Ascending aorta (tissue), 2 donors: ENCODE measurements at regions of chr17 and their contacts with region 1.

Region 1: DNA sequence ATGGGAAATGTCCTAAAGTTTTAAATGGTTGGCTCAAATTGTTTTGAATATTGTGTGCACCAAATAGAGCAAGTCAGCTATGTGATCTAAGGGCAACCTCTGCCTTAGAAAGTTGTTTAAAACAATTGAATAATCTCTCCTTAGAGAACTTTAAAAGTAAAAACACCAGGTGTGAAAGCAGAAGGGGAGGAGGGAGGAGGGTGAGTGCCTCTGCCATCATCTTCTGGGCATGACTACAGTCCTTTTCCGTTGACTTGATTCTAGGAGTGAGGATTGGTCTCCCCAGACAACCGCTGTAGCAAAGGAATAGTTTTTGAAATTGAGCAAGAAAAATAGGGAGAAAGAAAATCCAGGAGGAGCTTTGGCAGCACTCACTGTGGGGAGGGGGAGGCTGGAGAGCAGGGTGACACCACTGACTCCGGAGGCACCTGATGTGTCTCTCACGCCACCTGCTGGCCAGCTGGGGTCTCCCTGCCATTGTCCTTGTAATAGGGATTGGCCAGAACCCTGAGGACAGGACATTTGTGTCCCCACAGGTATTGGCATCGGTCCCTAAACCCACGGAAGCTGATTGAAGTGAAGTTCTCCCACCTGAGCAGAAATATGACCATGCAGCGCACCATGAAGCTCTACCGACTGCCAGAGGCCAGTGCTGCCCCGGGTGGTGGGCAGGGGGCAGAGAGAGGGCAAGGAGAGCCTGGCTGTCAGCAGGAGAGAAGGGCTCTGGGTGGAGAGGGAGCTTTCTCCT is 33.3 kb downstream of the PLCD3 start:
- DNase-seq: peak; percentile 63 to 97
- H3K4me3 ChIP-seq: peak overlapping the region in 1 of 2 donors; percentile 9
- H3K27ac ChIP-seq: peak overlapping the region; percentile 64 to 80
- H3K4me1 ChIP-seq: peaks cover 16 to 45% of the 10 kb centered on the region in 2 donors
- H3K27me3 ChIP-seq: no peaks in the 10 kb centered on the region
- CTCF ChIP-seq: peak; percentile 85 to 96 (median 91)

Region 2: DNA sequence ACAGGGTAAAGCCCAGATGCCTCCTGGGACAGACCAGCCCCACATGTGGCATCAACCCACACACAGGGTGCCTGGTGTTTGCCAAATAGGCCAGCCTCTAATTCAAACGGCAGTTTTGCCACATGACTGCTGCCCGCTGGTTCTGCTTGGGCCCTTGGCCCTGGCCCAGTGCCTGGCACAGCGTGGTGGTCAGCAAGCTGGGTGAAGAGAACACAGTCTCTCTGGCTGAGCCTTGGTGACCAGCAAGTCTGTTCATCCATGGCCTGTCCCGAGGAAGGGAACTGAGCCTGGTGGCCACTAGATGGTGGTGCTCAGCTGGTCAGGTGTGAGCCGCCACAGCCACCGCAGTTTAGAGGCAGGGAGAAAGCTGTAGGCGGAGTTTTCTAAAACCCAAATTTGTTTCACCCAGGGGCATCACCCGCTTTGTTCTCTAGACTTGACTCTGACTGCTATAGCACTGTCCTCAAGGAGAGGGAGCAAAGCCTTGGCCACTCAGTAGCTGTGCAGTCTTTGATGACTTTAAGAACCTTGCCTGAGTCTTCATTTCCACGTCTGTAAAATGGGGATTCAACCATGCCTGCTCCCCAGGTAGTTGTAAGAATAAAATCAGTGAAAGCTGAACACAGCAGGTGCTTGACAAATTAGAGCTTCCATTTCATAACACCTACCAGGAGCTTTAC is 179.0 kb before region 1 on chr17:
- intact Hi-C with region 1: loop called (anchors 2 kb)
- DNase-seq: peak; percentile 54 to 90
- H3K4me3 ChIP-seq: no peak overlapping the region
- H3K27ac ChIP-seq: peak overlapping the region in 1 of 2 donors; percentile 30
- H3K4me1 ChIP-seq: peaks cover 12 to 24% of the 10 kb centered on the region in 2 donors
- H3K27me3 ChIP-seq: no peaks in the 10 kb centered on the region
- CTCF ChIP-seq: peak; percentile 82 to 90 (median 89)

Region 3: GRCh38 chr17:44968226-44969143 is 130.6 kb before region 1 on chr17 and contains the start of gene C1QL1:
- intact Hi-C with region 1: loop called (anchors 5 kb)
- DNase-seq: peak; percentile 45 to 94
- H3K4me3 ChIP-seq: peak within 1 kb of the TSS; percentile 27 to 53
- H3K27ac ChIP-seq: no peak within 1 kb of the TSS
- H3K4me1 ChIP-seq: peaks cover 10 to 15% of the 10 kb centered on the region in 2 donors
- H3K27me3 ChIP-seq: peaks cover 9% of the 10 kb centered on the region
- CTCF ChIP-seq: no peak
- total RNA-seq, gene C1QL1: not detected

Region 4: GRCh38 chr17:45051060-45051719 is 47.9 kb before region 1 on chr17 and contains the start of gene DCAKD:
- intact Hi-C with region 1: loop called (anchors 2 kb)
- DNase-seq: peak; percentile 82 to 98
- H3K4me3 ChIP-seq: peak within 1 kb of the TSS; percentile 61 to 67
- H3K27ac ChIP-seq: peak within 1 kb of the TSS; percentile 92 to 94
- H3K4me1 ChIP-seq: peaks cover 8 to 17% of the 10 kb centered on the region in 2 donors
- H3K27me3 ChIP-seq: no peaks in the 10 kb centered on the region
- CTCF ChIP-seq: peak in 1 of 3 experiments; percentile 17
- total RNA-seq, gene DCAKD: 5.0 TPM